Activated naive CD4-positive, alpha-beta T cell treated with anti-CD3 and anti-CD28 coated beads for 36 hours (primary cell): ENCODE measurements at regions of chr5 and their contacts with region 1.

Region 1: GRCh38 chr5:65190328-65191053 is 291.2 kb downstream of the ADAMTS6 start:
- DNase-seq: peak; percentile 35
- H3K4me3 Mint-ChIP-seq: no peak overlapping the region
- H3K27ac Mint-ChIP-seq: peak overlapping the region; percentile 65
- H3K4me1 Mint-ChIP-seq: peaks cover 14% of the 10 kb centered on the region
- H3K27me3 Mint-ChIP-seq: peaks cover 9% of the 10 kb centered on the region

Region 2: GRCh38 chr5:64811050-64811640 is 379.3 kb before region 1 on chr5:
- CTCF ChIA-PET with region 1: no interaction called
- intact Hi-C with region 1: loop called (anchors 2 kb)
- DNase-seq: peak; percentile 8
- H3K4me3 Mint-ChIP-seq: no peak overlapping the region
- H3K27ac Mint-ChIP-seq: no peak overlapping the region
- H3K4me1 Mint-ChIP-seq: peaks cover 4% of the 10 kb centered on the region
- H3K27me3 Mint-ChIP-seq: no peaks in the 10 kb centered on the region

Region 3: DNA sequence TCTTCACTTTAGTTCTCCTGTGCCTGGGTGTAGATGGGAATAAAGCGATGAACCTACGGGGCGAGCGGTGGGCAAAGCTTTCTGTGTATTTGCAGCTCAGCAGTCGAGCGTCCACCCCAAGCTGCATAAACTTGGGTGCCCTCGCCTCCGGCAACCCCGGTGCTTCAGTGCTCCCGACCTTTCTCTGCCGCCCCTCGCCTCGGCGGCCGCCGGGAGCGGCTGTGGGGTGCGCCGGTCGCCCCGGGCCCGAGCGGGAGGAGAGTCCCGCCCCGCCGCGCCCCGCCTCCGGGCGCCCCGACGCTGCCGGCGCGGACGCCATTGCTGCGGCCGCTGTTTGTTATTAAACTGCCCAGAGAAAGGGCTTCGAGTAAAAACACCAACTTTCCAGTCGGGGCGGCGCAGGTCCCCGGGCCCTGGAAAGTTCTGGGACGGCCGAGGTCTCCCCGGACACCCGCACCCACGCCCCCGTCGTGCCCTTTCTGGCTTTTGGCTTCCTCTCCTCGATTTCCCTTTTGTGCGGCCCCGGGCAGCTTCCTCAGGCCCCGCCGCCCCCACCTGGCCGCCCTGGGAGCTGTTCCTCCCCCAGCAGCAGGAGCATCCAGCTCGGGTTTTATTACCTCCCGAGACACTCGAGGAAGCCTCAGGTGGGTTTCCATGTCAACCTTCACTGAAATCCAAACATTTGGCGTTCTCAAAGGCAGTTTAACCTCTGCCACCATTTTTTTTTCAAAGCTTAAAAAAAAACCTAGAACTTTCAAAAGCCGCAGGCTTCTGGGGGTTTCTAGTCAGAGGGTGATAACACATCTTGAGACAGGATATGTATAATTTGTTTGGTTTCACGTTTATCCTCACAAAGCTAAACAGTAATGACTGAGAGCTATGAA is 87.4 kb before region 1 on chr5:
- CTCF ChIA-PET with region 1: interaction called, 7 read pairs
- intact Hi-C with region 1: loop called (anchors 1 kb)
- DNase-seq: peak; percentile 39
- H3K4me3 Mint-ChIP-seq: peak overlapping the region; percentile 73
- H3K27ac Mint-ChIP-seq: peak overlapping the region; percentile 33
- H3K4me1 Mint-ChIP-seq: peaks cover 41% of the 10 kb centered on the region
- H3K27me3 Mint-ChIP-seq: peaks cover 2% of the 10 kb centered on the region

Region 4: GRCh38 chr5:65209341-65209740 is 18.9 kb after region 1 on chr5:
- CTCF ChIA-PET with region 1: no interaction called
- intact Hi-C with region 1: loop called (anchors 1 kb)
- DNase-seq: no peak
- H3K4me3 Mint-ChIP-seq: no peak overlapping the region
- H3K27ac Mint-ChIP-seq: no peak overlapping the region
- H3K4me1 Mint-ChIP-seq: no peaks in the 10 kb centered on the region
- H3K27me3 Mint-ChIP-seq: no peaks in the 10 kb centered on the region

Region 5: GRCh38 chr5:65548281-65548680 is 357.8 kb after region 1 on chr5:
- CTCF ChIA-PET with region 1: no interaction called
- intact Hi-C with region 1: no loop called
- DNase-seq: no peak
- H3K4me3 Mint-ChIP-seq: no peak overlapping the region
- H3K27ac Mint-ChIP-seq: no peak overlapping the region
- H3K4me1 Mint-ChIP-seq: no peaks in the 10 kb centered on the region
- H3K27me3 Mint-ChIP-seq: no peaks in the 10 kb centered on the region

Region 6: DNA sequence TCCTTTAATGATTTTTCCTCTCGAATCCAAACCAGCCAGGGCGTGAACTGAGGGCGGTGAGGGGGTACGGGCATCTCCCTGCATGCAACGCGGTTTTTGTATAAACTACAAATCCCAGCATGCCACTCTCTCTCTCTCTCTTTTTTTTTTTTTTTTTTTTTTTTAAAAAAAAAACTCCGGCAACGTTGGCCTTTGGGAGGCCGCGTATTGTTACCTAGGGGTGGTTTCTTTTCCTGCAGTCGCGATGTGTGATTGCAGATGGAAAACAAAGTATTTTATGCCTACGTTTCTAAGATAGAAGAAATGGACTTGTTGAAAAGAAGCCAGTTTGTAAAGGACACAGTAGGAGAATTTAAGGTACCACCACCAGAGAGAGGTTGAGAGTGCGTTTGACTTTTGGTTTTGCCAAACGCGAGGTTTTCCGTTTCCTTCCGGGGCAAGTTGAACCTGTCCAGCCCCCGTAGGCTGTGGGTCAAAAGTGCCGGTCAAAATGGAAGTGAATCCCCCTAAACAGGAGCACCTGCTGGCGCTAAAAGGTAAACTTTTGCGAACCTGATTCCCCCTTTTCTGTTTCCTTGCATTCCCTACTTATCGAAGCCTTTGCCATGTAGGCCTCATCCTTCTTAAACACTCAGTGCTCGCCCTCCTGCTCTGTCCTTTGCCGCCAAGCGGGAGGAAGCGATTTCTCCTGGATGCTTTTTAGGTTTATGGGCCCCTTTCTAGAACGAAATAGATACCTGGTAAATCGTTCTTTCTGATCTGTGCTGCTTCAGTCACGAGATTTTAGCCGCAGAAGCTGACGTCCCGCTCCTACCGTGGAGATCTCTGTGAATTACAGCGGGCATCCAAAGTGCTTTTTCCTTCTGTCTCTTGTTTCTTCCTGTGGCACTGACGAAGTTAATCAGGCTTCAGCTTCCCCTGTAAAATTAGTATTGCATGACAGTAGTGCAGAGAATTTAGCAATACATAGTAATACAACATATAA is 434.4 kb after region 1 on chr5 and contains the starts of genes SHLD3 and TRAPPC13:
- CTCF ChIA-PET with region 1: no interaction called
- intact Hi-C with region 1: loop called (anchors 10 kb)
- DNase-seq: peak; percentile 88
- H3K4me3 Mint-ChIP-seq: peak within 1 kb of the TSS; percentile 99
- H3K27ac Mint-ChIP-seq: peak within 1 kb of the TSS; percentile 94
- H3K4me1 Mint-ChIP-seq: peaks cover 50% of the 10 kb centered on the region
- H3K27me3 Mint-ChIP-seq: no peaks in the 10 kb centered on the region
- total RNA-seq, gene SHLD3: 2.9 to 3.1 TPM
- total RNA-seq, gene TRAPPC13: 25.7 to 29.0 TPM

Region 7: DNA sequence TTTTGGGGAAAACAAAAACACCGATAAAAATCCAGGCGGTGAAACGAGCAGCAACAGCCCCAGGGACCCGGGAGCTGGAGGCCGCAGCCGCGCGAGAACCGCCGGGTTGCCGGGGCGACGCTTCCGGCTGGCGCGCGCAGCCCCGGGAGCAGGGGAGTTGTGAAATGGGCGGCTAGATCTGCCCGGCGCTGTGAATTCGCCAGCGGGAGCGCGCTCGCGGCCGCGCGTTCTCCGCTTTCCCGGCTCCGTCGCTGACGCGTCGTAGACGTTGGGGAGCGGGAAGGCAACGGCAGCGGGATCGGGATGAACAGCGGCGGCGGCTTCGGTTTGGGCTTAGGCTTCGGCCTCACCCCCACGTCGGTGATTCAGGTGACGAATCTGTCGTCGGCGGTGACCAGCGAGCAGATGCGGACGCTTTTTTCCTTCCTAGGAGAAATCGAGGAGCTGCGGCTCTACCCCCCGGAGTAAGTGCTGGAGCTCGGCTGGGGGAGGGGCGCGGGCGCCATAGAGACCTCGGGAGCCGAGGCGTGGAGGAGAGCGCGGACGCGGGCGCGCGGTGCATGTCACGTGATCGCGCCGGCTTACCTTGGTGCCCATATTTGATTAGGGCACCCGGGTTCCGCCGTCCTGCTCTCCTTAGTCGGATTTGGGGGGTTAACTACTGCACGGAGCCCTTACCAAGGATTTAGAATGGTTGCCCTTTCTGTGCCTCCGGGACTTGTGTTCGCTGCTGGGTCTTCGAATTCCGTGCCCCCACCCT is 953.8 kb after region 1 on chr5 and contains the start of gene SREK1:
- CTCF ChIA-PET with region 1: no interaction called
- intact Hi-C with region 1: loop called (anchors 5 kb)
- DNase-seq: peak; percentile 90
- H3K4me3 Mint-ChIP-seq: peak within 1 kb of the TSS; percentile 92
- H3K27ac Mint-ChIP-seq: peak within 1 kb of the TSS; percentile 98
- H3K4me1 Mint-ChIP-seq: peaks cover 53% of the 10 kb centered on the region
- H3K27me3 Mint-ChIP-seq: no peaks in the 10 kb centered on the region
- total RNA-seq, gene SREK1: 52.2 to 60.0 TPM